GM12878 (cell line): ENCODE measurements at regions of chr7 and their contacts with region 1.

Region 1: GRCh38 chr7:150668472-150668911 is 17.0 kb upstream of the GIMAP2 start:
- DNase-seq: peak; percentile 99
- ATAC-seq: peak; percentile 90
- H3K4me3 ChIP-seq: no peak overlapping the region
- H3K27ac ChIP-seq: peak overlapping the region; percentile 76
- H3K4me1 ChIP-seq: peaks cover 65% of the 10 kb centered on the region
- H3K27me3 ChIP-seq: no peaks in the 10 kb centered on the region
- CTCF ChIP-seq: no peak
- EP300 ChIP-seq: peak; percentile 33 to 82; a peak in 2 of 4 replicates
- POLR2A ChIP-seq: peak; percentile 37; the same call in 1 of the 2 replicates
- RAD21 ChIP-seq: peak; percentile 19; the same call in 1 of the 2 replicates

Region 2: GRCh38 chr7:150378853-150379440 is 289.5 kb before region 1 on chr7 and contains the start of gene ZNF775:
- CTCF ChIA-PET with region 1: no interaction called
- POLR2A ChIA-PET with region 1: interaction called, 3 read pairs
- RAD21 ChIA-PET with region 1: interaction called, 3 read pairs
- SMC1A ChIA-PET with region 1: interaction called, 3 read pairs
- in situ Hi-C with region 1: no loop called
- intact Hi-C with region 1: loop called (anchors 5 kb)
- DNase-seq: no peak
- ATAC-seq: peak; percentile 87
- H3K4me3 ChIP-seq: peak within 1 kb of the TSS; percentile 99
- H3K27ac ChIP-seq: peak within 1 kb of the TSS; percentile 97
- H3K4me1 ChIP-seq: peaks cover 75% of the 10 kb centered on the region
- H3K27me3 ChIP-seq: no peaks in the 10 kb centered on the region
- CTCF ChIP-seq: no peak
- EP300 ChIP-seq: no peak
- POLR2A ChIP-seq: peak; percentile 93
- RAD21 ChIP-seq: no peak
- polyA plus RNA-seq, gene ZNF775: 0.05 to 0.46 TPM

Region 3: GRCh38 chr7:150620617-150621371 is 47.7 kb before region 1 on chr7:
- CTCF ChIA-PET with region 1: no interaction called
- POLR2A ChIA-PET with region 1: no interaction called
- RAD21 ChIA-PET with region 1: no interaction called
- SMC1A ChIA-PET with region 1: interaction called, 11 read pairs
- in situ Hi-C with region 1: no loop called
- intact Hi-C with region 1: no loop called
- DNase-seq: no peak
- ATAC-seq: peak; percentile 45
- H3K4me3 ChIP-seq: no peak overlapping the region; the same call in 1 of the 2 replicates
- H3K27ac ChIP-seq: peak overlapping the region; percentile 67
- H3K4me1 ChIP-seq: peaks cover 17% of the 10 kb centered on the region
- H3K27me3 ChIP-seq: no peaks in the 10 kb centered on the region
- CTCF ChIP-seq: no peak
- EP300 ChIP-seq: no peak
- POLR2A ChIP-seq: no peak
- RAD21 ChIP-seq: no peak

Region 4: GRCh38 chr7:150631866-150632864 is 36.3 kb before region 1 on chr7 and contains the start of gene GIMAP6:
- CTCF ChIA-PET with region 1: interaction called, 6 read pairs
- POLR2A ChIA-PET with region 1: interaction called, 4 read pairs
- RAD21 ChIA-PET with region 1: interaction called, 11 read pairs
- SMC1A ChIA-PET with region 1: interaction called, 9 read pairs
- in situ Hi-C with region 1: no loop called
- intact Hi-C with region 1: loop called (anchors 1 kb)
- DNase-seq: peak; percentile 51
- ATAC-seq: peak; percentile 88
- H3K4me3 ChIP-seq: peak within 1 kb of the TSS; percentile 85
- H3K27ac ChIP-seq: peak within 1 kb of the TSS; percentile 78
- H3K4me1 ChIP-seq: peaks cover 7% of the 10 kb centered on the region
- H3K27me3 ChIP-seq: no peaks in the 10 kb centered on the region
- CTCF ChIP-seq: no peak
- EP300 ChIP-seq: no peak
- POLR2A ChIP-seq: peak; percentile 57; the same call in 1 of the 2 replicates
- RAD21 ChIP-seq: peak; percentile 40
- polyA plus RNA-seq, gene GIMAP6: 6.2 to 8.3 TPM

Region 5: DNA sequence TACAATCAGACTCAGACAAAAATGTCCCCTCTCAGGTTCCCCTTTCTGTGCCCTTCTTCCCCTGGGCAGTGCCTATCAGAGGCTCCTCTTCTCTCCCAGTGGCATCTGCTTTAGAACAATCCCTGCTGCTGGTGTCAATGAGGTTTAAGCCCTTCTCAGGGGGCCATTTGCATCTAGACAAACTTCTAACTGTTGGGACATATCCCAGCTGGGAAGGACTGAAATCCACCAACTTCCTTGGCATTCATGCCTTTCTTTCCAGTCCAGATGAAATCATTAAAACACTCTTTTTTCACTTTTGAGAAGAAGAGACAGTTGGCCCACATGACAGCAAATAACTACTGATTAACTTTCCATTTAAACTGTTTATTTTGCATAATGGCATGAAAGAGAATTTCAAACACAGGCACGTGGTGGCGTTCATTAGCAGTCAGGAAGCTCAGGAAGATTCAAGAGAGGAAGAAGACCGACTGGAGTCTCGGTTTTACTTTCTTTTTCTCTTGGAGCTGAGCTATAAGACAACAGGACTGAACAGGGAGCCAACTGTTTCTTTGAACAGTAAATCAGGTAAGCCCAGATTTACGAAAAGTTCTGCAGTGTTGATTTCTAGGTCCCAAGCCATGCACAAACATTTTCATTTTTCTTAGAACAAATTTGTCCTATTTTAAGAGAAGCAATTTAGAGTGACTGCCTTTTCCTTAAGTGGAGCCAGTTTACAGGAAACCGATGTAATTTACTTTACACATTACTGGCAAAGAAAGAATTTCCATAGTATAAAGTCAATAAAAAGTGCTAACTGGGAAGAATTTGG is 16.9 kb after region 1 on chr7 and contains the start of gene GIMAP2:
- CTCF ChIA-PET with region 1: interaction called, 11 read pairs
- POLR2A ChIA-PET with region 1: interaction called, 27 read pairs
- RAD21 ChIA-PET with region 1: interaction called, 31 read pairs
- SMC1A ChIA-PET with region 1: interaction called, 57 read pairs
- in situ Hi-C with region 1: no loop called
- intact Hi-C with region 1: loop called (anchors 2 kb)
- DNase-seq: no peak
- ATAC-seq: peak; percentile 96
- H3K4me3 ChIP-seq: peak within 1 kb of the TSS; percentile 89
- H3K27ac ChIP-seq: peak within 1 kb of the TSS; percentile 91
- H3K4me1 ChIP-seq: peaks cover 7% of the 10 kb centered on the region; the same call in 1 of the 2 replicates
- H3K27me3 ChIP-seq: no peaks in the 10 kb centered on the region
- CTCF ChIP-seq: peak in 1 of 3 experiments; percentile 7; a peak in 1 of 6 replicates
- EP300 ChIP-seq: no peak
- POLR2A ChIP-seq: 0 out of 2 replicates have a peak, but pooled peaks have one; percentile 35
- RAD21 ChIP-seq: peak; percentile 41; the same call in 1 of the 2 replicates
- polyA plus RNA-seq, gene GIMAP2: 47.5 to 60.0 TPM

Region 6: DNA sequence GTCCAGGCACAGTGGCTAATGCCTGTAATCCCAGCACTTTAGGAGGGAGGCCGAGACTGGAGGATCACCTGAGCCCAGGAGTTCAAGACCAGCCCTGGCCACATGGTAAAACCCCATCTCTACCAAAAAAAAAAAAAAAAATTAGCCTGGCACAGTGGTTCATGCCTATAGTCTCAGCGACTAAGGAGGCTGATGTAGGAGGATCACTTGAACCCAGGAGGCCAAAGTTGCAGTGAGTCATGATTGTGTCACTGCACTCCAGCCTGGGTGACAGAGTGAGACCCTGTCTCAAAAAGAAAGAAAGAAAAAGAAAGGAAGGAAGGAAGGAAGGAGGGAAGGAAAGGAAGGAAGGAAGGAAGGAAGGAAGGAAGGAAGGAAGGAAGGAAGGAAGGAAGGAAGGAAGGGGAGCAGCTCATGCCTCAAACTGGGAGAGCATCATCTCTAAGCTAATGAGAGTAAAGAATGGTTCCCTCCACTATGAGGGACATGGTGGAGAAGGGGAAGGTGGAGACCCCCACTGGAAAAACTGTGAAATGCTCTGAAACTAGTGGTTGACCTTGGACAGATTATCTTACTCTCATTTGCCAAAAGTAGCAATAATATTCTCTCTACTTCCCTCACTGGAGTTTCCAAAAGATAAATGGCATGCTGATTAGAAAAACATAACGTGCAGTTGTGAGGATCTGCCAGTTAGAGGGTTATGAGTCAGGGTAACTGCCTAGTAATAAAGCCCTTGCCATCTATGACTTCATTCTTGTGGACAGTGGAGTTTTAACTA is 85.5 kb after region 1 on chr7:
- CTCF ChIA-PET with region 1: interaction called, 16 read pairs
- POLR2A ChIA-PET with region 1: no interaction called
- RAD21 ChIA-PET with region 1: interaction called, 22 read pairs
- SMC1A ChIA-PET with region 1: interaction called, 28 read pairs
- in situ Hi-C with region 1: no loop called
- intact Hi-C with region 1: loop called (anchors 2 kb)
- DNase-seq: no peak
- ATAC-seq: peak; percentile 83
- H3K4me3 ChIP-seq: no peak overlapping the region
- H3K27ac ChIP-seq: peak overlapping the region; percentile 32
- H3K4me1 ChIP-seq: peaks cover 29% of the 10 kb centered on the region
- H3K27me3 ChIP-seq: no peaks in the 10 kb centered on the region
- CTCF ChIP-seq: peak; percentile 45 to 56 (median 52); a peak in 5 of 6 replicates
- EP300 ChIP-seq: no peak
- POLR2A ChIP-seq: no peak
- RAD21 ChIP-seq: peak; percentile 71